HCT116 (cell line): ENCODE measurements at regions of chr17 and their contacts with region 1.

Region 1: DNA sequence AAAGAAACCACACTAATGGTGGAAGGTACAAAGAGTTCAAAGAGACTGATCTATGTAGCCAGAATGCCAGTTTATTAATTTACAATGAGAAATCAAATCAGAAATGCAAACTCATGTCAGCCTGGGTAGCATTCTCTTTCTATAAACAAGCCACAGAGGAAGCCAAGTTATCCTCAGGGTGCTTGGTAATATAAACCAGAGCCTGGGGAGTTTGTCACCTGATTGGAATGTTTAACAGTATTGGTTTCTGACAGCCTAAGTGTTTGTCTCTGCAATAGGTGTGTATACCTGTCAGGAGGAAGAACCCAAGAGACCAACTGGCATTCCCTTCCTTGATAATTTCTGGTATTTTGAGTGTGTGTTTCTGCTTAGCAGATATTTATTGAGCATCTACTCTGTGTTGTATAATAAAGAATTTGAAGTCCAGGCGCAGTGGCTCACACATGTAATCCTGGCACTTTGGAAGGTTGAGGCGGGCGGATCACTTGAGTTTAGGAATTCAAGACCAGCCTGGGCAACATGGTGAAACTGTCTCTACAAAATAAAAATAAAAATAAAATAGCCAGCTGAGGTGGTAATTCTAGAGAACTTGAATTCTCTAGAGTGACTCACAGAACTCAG is 3.1 kb upstream of the C17orf58 start:
- DNase-seq: no peak
- ATAC-seq: peak; percentile 80
- H3K4me3 ChIP-seq: no peak overlapping the region
- H3K27ac ChIP-seq: no peak overlapping the region
- H3K4me1 ChIP-seq: peaks cover 12 to 25% of the 10 kb centered on the region in 2 experiments
- H3K27me3 ChIP-seq: no peaks in the 10 kb centered on the region
- CTCF ChIP-seq: no peak
- POLR2A ChIP-seq: no peak
- RAD21 ChIP-seq: no peak

Region 2: DNA sequence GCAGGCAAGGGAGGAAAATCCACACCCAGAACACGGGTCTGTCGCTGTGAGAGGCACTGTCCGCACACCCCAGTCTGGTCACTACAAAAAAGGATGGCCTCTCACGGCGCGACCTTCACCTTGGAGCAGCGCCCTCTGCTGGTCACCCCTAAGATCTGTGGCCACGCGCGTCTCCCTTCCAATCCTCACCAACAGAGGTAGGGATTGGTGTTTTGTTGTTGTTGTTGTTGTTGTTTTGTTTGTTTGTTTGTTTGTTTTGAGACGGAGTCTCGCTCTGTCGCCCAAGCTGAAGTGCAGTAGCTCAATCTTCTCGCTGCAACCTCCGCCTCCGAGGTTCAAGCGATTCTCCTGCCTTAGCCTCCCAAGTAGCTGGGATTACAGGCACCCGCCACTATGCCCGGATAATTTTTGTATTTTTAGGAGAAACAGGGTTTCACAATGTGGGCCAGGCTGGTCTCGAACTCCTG is 11.8 kb after region 1 on chr17:
- CTCF ChIA-PET with region 1: interaction called, 10 read pairs
- POLR2A ChIA-PET with region 1: interaction called, 3 read pairs
- RAD21 ChIA-PET with region 1: no interaction called
- intact Hi-C with region 1: no loop called
- DNase-seq: no peak
- ATAC-seq: peak; percentile 91
- H3K4me3 ChIP-seq: 0 out of 4 replicates have a peak overlapping the region, but pooled peaks of 1 of the 2 experiments have one; percentile 9
- H3K27ac ChIP-seq: no peak overlapping the region
- H3K4me1 ChIP-seq: peaks cover 2 to 15% of the 10 kb centered on the region in 2 experiments; a peak in 3 of 4 replicates
- H3K27me3 ChIP-seq: no peaks in the 10 kb centered on the region
- CTCF ChIP-seq: peak; percentile 71 to 97 (median 93)
- POLR2A ChIP-seq: no peak
- RAD21 ChIP-seq: peak; percentile 49

Region 3: GRCh38 chr17:68255731-68256538 is 256.5 kb after region 1 on chr17:
- CTCF ChIA-PET with region 1: no interaction called
- POLR2A ChIA-PET with region 1: no interaction called
- RAD21 ChIA-PET with region 1: no interaction called
- intact Hi-C with region 1: no loop called
- DNase-seq: no peak
- ATAC-seq: no peak
- H3K4me3 ChIP-seq: no peak overlapping the region
- H3K27ac ChIP-seq: no peak overlapping the region
- H3K4me1 ChIP-seq: peaks cover 5 to 21% of the 10 kb centered on the region in 2 experiments; a peak in 3 of 4 replicates
- H3K27me3 ChIP-seq: no peaks in the 10 kb centered on the region
- CTCF ChIP-seq: no peak
- POLR2A ChIP-seq: no peak
- RAD21 ChIP-seq: no peak